MCF 10A (cell line): ENCODE measurements at regions of chr13 and their contacts with region 1.

Region 1: DNA sequence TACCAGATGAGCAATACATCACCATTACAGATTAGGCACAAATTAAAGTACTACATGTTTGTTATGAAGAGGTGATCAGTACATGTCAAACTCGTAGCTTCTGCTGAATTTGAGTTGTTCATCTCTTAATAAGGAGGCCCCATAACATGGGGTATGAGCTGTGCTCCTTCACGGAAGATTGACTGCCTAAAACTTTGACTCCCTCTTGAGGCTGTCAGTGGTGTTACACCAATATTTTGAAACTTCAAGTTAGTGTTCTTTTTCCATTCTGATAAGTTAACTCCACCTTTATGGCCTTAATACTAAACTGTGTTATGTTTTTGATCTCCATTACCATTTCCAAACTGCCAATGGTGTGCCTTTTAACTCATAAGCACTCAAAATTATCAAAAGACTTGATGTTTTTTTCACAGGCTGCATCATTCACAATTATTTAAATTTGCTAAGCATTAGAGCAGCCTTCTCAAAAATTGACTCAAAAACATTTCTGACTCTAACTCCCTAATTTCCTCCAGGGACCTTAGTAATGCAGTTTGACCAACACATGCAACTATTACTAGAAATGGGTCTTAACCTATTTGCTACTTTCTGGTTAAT is 1591.5 kb downstream of the PCDH9 start:
- DNase-seq: peak; percentile 53
- H3K4me3 Mint-ChIP-seq: no peak overlapping the region
- H3K27ac Mint-ChIP-seq: no peak overlapping the region
- H3K4me1 Mint-ChIP-seq: no peaks in the 10 kb centered on the region
- H3K27me3 Mint-ChIP-seq: no peaks in the 10 kb centered on the region
- CTCF ChIP-seq: peak; percentile 63

Region 2: GRCh38 chr13:64154514-64154913 is 1484.2 kb before region 1 on chr13:
- CTCF ChIA-PET with region 1: no interaction called
- POLR2A ChIA-PET with region 1: no interaction called
- intact Hi-C with region 1: loop called (anchors 5 kb)
- DNase-seq: peak; percentile 28
- H3K4me3 Mint-ChIP-seq: no peak overlapping the region
- H3K27ac Mint-ChIP-seq: no peak overlapping the region
- H3K4me1 Mint-ChIP-seq: peaks cover 5% of the 10 kb centered on the region
- H3K27me3 Mint-ChIP-seq: no peaks in the 10 kb centered on the region
- CTCF ChIP-seq: peak; percentile 28

Region 3: GRCh38 chr13:64471916-64472315 is 1166.8 kb before region 1 on chr13:
- CTCF ChIA-PET with region 1: interaction called, 36 read pairs
- POLR2A ChIA-PET with region 1: no interaction called
- intact Hi-C with region 1: loop called (anchors 1 kb)
- DNase-seq: peak; percentile 43
- H3K4me3 Mint-ChIP-seq: no peak overlapping the region
- H3K27ac Mint-ChIP-seq: no peak overlapping the region
- H3K4me1 Mint-ChIP-seq: no peaks in the 10 kb centered on the region
- H3K27me3 Mint-ChIP-seq: no peaks in the 10 kb centered on the region
- CTCF ChIP-seq: peak; percentile 55

Region 4: GRCh38 chr13:64819081-64819480 is 819.6 kb before region 1 on chr13:
- CTCF ChIA-PET with region 1: interaction called, 4 read pairs
- POLR2A ChIA-PET with region 1: no interaction called
- intact Hi-C with region 1: loop called (anchors 5 kb)
- DNase-seq: peak; percentile 1
- H3K4me3 Mint-ChIP-seq: no peak overlapping the region
- H3K27ac Mint-ChIP-seq: no peak overlapping the region
- H3K4me1 Mint-ChIP-seq: peaks cover 4% of the 10 kb centered on the region
- H3K27me3 Mint-ChIP-seq: no peaks in the 10 kb centered on the region
- CTCF ChIP-seq: no peak

Region 5: DNA sequence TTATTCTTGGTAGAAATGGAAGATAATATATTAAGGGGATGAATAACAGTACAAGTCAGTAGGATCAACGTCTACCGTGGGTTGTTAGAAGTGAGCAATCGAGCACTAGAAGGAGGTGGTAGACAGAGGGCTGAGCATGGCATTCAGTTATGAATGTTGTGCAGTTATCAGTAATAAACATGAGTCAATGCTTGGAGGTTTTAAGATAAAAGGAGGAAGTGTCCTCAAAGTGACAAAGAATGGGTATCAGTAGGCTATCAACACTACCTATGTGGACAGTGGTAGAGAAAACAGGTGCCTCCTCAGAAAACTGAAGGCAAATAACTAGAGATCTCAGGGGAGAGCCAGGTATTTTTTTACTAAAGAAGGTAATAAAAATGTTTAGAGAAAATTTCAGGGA is 15.5 kb before region 1 on chr13:
- CTCF ChIA-PET with region 1: interaction called, 10 read pairs
- POLR2A ChIA-PET with region 1: no interaction called
- intact Hi-C with region 1: no loop called
- DNase-seq: no peak
- H3K4me3 Mint-ChIP-seq: no peak overlapping the region
- H3K27ac Mint-ChIP-seq: no peak overlapping the region
- H3K4me1 Mint-ChIP-seq: no peaks in the 10 kb centered on the region
- H3K27me3 Mint-ChIP-seq: no peaks in the 10 kb centered on the region
- CTCF ChIP-seq: no peak